ENCODE measurements at regions of chr14 and their contacts with region 1.

Region 1: GRCh38 chr14:81927070-81927469 is 393.4 kb upstream of the SEL1L start:
- DNase-seq: peak in 1 of 2 experiments; percentile 9
- H3K4me3 ChIP-seq: no peak overlapping the region
- H3K4me3 Mint-ChIP-seq: no peak overlapping the region
- H3K27ac Mint-ChIP-seq: no peak overlapping the region
- H3K4me1 ChIP-seq: no peaks in the 10 kb centered on the region
- H3K4me1 Mint-ChIP-seq: no peaks in the 10 kb centered on the region
- H3K27me3 ChIP-seq: no peaks in the 10 kb centered on the region
- H3K27me3 Mint-ChIP-seq: no peaks in the 10 kb centered on the region
- CTCF ChIP-seq: peak in 1 of 2 experiments; percentile 48

Region 2: GRCh38 chr14:81946834-81947798 is 20.0 kb after region 1 on chr14:
- CTCF ChIA-PET with region 1: no interaction called
- POLR2A ChIA-PET with region 1: no interaction called
- intact Hi-C with region 1: loop called (anchors 1 kb)
- DNase-seq: no peak
- H3K4me3 ChIP-seq: no peak overlapping the region
- H3K4me3 Mint-ChIP-seq: no peak overlapping the region
- H3K27ac Mint-ChIP-seq: no peak overlapping the region
- H3K4me1 ChIP-seq: no peaks in the 10 kb centered on the region
- H3K4me1 Mint-ChIP-seq: no peaks in the 10 kb centered on the region
- H3K27me3 ChIP-seq: no peaks in the 10 kb centered on the region
- H3K27me3 Mint-ChIP-seq: no peaks in the 10 kb centered on the region
- CTCF ChIP-seq: no peak

Region 3: DNA sequence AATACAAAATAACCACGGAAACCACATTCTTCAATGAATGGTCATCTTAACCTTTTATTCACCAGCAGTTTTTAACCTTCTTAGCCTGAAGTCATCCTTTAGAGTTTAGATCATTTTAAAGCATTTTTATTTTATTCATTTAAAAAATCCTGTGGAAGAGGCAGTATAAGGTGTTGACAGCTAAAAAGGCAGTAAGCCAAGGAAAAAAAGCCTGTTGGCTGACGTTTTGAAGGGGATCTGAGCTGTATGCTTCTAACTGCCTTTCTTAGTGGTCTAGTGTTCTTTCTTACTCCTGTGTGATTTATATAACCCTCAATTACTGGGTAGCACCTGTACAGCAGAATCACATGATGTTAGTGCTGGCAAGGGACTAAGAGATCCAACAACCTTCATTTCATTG is 44.8 kb after region 1 on chr14:
- CTCF ChIA-PET with region 1: no interaction called
- POLR2A ChIA-PET with region 1: no interaction called
- intact Hi-C with region 1: no loop called
- DNase-seq: no peak
- H3K4me3 ChIP-seq: no peak overlapping the region
- H3K4me3 Mint-ChIP-seq: no peak overlapping the region
- H3K27ac Mint-ChIP-seq: no peak overlapping the region
- H3K4me1 ChIP-seq: no peaks in the 10 kb centered on the region
- H3K4me1 Mint-ChIP-seq: no peaks in the 10 kb centered on the region
- H3K27me3 ChIP-seq: no peaks in the 10 kb centered on the region
- H3K27me3 Mint-ChIP-seq: no peaks in the 10 kb centered on the region
- CTCF ChIP-seq: no peak